PC-9 (cell line): ENCODE measurements at regions of chr16 and their contacts with region 1.

Region 1: DNA sequence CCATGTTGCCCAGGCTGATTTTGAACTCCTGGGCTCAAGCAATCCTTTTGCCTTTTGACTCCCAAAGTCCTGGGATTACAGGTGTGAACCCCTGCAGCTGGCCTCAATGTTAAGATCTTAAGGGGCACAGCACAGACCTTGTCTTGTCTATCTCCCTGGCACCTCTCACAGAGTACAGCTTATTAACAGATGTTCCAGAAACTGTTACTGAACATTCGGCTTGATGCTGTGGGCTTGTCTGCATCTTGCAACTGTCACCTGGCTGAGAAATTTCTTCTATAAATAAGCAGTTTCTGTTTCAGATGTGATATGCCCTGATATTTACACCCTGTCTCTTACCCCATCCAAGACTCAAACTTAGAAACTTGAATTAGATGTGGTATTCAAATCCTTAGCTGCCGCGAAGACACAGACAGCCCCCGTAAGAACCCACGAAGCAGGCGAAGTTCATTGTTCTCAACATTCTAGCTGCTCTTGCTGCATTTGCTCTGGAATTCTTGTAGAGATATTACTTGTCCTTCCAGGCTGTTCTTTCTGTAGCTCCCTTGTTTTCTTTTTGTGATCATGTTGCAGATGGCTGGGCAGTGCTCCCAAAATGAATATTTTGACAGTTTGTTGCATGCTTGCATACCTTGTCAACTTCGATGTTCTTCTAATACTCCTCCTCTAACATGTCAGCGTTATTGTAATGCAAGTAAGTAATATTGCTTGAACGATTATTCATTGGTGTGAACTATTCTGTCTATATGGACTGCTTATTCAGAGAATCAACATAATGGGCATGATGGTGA is at the start of gene TNFRSF17:
- DNase-seq: no peak
- H3K4me3 ChIP-seq: no peak within 1 kb of the TSS
- H3K27ac ChIP-seq: no peak within 1 kb of the TSS
- H3K4me1 ChIP-seq: no peaks in the 10 kb centered on the region
- H3K27me3 ChIP-seq: no peaks in the 10 kb centered on the region
- CTCF ChIP-seq: no peak
- total RNA-seq, gene TNFRSF17: not detected in 2 replicates

Region 2: GRCh38 chr16:10961231-10961630 is 1003.7 kb before region 1 on chr16:
- CTCF ChIA-PET with region 1: no interaction called
- POLR2A ChIA-PET with region 1: no interaction called
- intact Hi-C with region 1: no loop called
- DNase-seq: no peak
- H3K4me3 ChIP-seq: no peak overlapping the region
- H3K27ac ChIP-seq: no peak overlapping the region
- H3K4me1 ChIP-seq: peaks cover 13% of the 10 kb centered on the region
- H3K27me3 ChIP-seq: no peaks in the 10 kb centered on the region
- CTCF ChIP-seq: no peak

Region 3: DNA sequence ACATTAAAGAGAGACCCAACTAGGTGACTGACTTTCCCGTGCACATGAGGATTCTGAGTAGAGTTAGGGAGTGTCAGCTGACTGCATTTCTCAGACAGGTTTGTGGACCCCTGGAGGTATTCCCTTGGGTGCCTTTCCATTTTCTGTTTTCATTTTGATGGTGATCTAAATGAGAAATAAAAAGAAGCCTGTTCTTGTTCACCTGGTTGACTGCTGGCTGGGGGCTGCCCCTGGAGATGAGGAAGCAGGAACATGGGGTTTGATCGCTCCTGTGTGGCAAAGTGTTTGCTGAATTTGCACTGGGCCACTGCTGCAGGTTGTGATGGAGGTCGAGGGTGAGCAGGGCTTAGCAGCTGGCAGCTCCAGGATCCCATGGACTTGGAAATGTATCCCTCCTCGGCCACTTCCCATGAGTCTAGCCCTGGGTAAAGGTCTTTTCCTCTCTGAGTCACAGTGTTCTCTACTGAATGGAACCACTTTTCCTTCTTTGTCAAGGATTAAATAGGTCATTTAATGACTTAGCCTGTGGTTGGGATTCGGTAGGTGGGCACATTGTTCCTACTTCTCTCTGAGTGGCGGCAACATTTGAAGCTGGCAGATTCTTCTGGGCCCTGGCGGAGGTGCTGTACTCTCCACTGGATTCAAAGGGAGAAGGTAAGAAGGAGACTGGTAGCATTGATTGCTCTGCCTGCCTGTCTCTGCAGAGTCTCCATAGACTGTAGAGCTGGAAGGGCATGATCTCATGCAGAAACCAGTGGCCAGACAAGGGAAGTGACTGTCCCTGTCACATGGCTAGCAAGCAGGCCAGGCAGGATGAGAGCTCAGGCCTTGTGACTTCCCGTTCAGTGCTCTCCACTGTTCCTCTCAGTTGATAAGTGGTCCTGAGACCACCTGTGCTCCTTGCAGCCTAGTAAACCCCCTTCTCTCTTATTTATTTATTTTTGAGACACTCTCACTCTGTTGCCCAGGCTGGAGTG is 29.5 kb after region 1 on chr16:
- CTCF ChIA-PET with region 1: no interaction called
- POLR2A ChIA-PET with region 1: interaction called, 49 read pairs
- intact Hi-C with region 1: no loop called
- DNase-seq: no peak
- H3K4me3 ChIP-seq: no peak overlapping the region
- H3K27ac ChIP-seq: no peak overlapping the region
- H3K4me1 ChIP-seq: no peaks in the 10 kb centered on the region
- H3K27me3 ChIP-seq: no peaks in the 10 kb centered on the region
- CTCF ChIP-seq: no peak

Region 4: DNA sequence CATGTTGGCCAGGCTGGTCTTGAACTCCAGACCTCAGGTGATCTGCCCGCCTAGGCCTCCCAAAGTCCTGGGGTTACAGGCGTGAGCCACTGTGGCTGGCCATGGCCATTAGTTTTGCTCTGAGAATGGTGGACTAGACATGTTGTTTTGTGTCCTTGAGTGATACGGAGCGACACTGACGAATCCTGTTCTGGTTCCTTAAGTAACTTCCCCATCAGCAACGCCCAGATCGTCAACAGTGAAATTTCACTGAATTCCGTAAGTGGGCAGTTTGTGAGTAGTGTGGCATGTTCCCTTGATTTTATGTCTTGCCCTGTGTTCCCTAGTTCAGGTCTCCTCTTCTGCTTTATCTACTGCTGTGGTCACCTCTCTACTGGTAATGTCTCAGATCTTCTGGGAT is 79.0 kb after region 1 on chr16:
- CTCF ChIA-PET with region 1: interaction called, 16 read pairs
- POLR2A ChIA-PET with region 1: no interaction called
- intact Hi-C with region 1: no loop called
- DNase-seq: no peak
- H3K4me3 ChIP-seq: no peak overlapping the region
- H3K27ac ChIP-seq: no peak overlapping the region
- H3K4me1 ChIP-seq: no peaks in the 10 kb centered on the region
- H3K27me3 ChIP-seq: no peaks in the 10 kb centered on the region
- CTCF ChIP-seq: no peak

Region 5: DNA sequence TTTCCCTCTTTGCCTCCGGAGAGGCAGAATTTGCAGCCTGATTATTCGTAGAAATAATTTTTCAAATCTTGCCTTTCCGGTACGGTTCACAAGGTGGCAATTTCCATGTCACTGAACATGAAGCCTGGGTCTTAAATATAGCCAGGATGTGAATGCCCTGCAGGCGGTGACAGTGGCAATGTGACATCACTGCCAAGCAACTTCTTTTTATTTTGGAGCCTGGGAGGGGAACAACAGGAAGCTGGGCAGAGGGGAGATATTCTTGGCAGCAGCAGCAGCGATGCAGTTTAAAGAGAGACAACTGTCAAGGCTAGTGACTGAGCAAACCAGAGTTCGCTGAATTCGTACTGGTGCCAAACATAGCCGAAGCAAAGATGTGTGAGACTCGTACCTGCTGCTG is 182.7 kb after region 1 on chr16:
- CTCF ChIA-PET with region 1: no interaction called
- POLR2A ChIA-PET with region 1: no interaction called
- intact Hi-C with region 1: no loop called
- DNase-seq: no peak
- H3K4me3 ChIP-seq: no peak overlapping the region
- H3K27ac ChIP-seq: no peak overlapping the region
- H3K4me1 ChIP-seq: no peaks in the 10 kb centered on the region
- H3K27me3 ChIP-seq: no peaks in the 10 kb centered on the region
- CTCF ChIP-seq: no peak